Dorsolateral prefrontal cortex (tissue), 120 donors: ENCODE measurements at regions of chr9 and their contacts with region 1.

Region 1: DNA sequence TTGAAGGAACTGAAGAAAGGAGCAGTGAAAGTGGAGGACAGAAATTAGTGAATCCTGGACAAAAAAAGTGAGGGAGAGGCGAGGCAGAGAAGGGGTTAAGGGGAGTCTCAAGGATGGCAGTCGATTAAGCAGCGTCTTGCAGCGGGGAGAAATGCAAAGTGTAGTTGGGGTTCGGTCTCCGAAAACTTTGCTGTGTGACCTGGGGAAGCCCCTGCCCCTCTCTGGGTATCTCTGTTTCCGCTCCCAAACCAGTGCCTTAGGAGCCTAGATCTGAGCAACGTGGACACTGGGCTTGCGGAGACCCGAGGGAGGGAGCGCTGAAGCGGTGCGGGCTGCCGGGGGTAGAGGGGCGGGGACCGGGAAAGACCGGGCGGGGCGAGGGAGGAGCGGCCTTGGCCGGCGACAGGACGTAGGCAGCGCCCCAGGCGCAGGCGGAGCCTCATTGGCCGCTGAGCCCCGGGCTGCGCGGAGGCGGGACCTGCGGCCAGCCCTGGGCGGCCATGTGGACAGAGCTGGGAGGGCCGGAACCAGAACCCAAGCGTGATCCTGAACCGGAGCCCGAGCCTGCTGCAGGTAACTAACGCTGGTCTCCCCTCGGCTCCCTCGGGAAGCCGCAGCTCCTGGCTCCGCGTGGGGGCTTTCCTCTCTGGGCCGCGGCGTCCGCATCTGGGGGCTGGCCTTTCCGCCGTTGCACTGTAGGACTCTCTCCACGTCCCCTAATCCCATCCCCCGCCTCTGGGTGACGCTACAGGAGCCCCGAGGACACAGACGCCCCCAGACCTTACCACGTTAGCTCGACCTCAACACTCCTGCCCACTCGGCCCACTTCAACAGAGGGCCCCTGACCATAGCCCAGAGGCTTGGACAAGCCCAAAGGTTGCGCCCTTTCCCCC is at the start of gene ALDH1B1:
- DNase-seq: peak; percentile 45 to 88 (median 74)
- H3K4me3 ChIP-seq: peak within 1 kb of the TSS; percentile 54 to 91 (median 80)
- H3K27ac ChIP-seq: peak within 1 kb of the TSS in 10 of 59 donors; percentile 16 to 72 (median 50)
- H3K27me3 ChIP-seq: no peaks in the 10 kb centered on the region
- CTCF ChIP-seq: peak in 18 of 56 donors; percentile 10 to 47 (median 15)
- total RNA-seq, gene ALDH1B1: 5.5 to 19.4 (median 9.7) TPM

Region 2: DNA sequence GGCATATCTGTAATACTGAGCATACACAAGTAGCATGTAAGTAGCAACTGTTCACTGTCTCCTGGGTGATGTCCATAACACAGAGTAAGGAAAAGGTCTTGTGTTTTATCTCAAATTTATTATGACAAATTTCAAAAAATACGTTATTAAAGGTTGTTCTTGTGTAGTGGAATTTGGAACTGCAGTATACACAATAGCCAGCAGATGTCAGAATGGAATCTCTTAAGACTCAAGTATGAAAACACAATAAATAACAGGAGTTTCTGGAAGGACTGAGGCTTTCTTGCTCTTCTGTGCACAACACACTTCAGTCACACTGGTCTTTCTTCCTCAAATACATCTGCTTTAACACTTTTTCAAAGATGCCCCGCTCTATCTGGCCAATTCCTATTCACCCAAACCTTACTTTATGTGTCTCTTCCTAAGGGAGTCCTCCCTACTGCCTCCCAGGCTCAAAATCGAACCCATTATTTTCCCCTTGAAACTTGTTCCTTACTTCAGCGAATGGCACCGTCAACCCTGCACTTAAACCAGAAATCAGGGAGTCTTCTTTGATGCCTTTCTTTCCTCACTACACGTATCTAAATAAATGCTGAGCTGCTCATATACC is 809.8 kb before region 1 on chr9:
- intact Hi-C with region 1: loop called in 1 of 2 experiments (anchors 10 kb)
- DNase-seq: no peak
- H3K4me3 ChIP-seq: no peak overlapping the region
- H3K27ac ChIP-seq: peak overlapping the region in 46 of 59 donors; percentile 7 to 93 (median 59)
- H3K27me3 ChIP-seq: no peaks in the 10 kb centered on the region
- CTCF ChIP-seq: peak; percentile 64 to 90 (median 78)